Tibial artery (tissue), 4 donors: ENCODE measurements at regions of chr12 and their contacts with region 1.

Region 1: DNA sequence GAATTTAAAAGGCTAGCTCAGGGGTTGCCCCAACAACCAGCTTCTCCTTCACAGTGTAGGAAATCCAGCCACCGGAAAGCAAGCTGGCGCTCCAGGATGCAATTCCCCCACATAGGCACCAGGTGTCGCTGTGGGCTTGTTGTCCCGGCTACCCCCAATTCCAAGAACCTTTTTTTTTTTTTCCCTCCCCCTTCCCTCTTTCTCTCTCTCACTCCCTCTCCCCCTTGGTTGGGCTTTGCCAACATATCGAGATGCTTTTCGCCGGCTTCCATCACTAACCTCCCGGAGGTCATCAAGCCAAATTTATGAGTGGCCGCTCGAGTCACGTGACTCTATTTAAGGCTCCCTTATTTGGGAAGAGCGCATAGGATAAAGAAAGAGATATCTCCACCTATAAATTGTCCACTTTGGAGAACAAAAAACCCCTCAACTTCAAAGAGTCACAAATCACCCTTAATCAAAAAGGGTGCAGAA is at the start of gene HOXC5:
- DNase-seq: peak; percentile 65 to 86
- H3K4me3 ChIP-seq: peak within 1 kb of the TSS; percentile 50 to 55
- H3K27ac ChIP-seq: peak within 1 kb of the TSS; percentile 41 to 49
- H3K4me1 ChIP-seq: peaks cover 0 to 83% (median 63%) of the 10 kb centered on the region in 4 donors
- H3K27me3 ChIP-seq: no peaks in the 10 kb centered on the region
- CTCF ChIP-seq: peak; percentile 94

Region 2: GRCh38 chr12:53984901-53985709 is 47.6 kb before region 1 on chr12 and contains the start of gene HOXC10:
- intact Hi-C with region 1: no loop called
- DNase-seq: peak; percentile 97 to 98
- H3K4me3 ChIP-seq: peak within 1 kb of the TSS; percentile 64 to 84
- H3K27ac ChIP-seq: peak within 1 kb of the TSS; percentile 93 to 98
- H3K4me1 ChIP-seq: peaks cover 4 to 52% (median 31%) of the 10 kb centered on the region in 4 donors
- H3K27me3 ChIP-seq: no peaks in the 10 kb centered on the region
- CTCF ChIP-seq: peak; percentile 77 to 82

Region 3: GRCh38 chr12:54134850-54135249 is 102.2 kb after region 1 on chr12:
- intact Hi-C with region 1: loop called (anchors 5 kb)
- DNase-seq: no peak
- H3K4me3 ChIP-seq: no peak overlapping the region
- H3K27ac ChIP-seq: no peak overlapping the region
- H3K4me1 ChIP-seq: peaks cover 0 to 32% (median under 1%) of the 10 kb centered on the region in 4 donors
- H3K27me3 ChIP-seq: no peaks in the 10 kb centered on the region
- CTCF ChIP-seq: no peak

Region 4: GRCh38 chr12:54147186-54147585 is 114.5 kb after region 1 on chr12:
- intact Hi-C with region 1: loop called (anchors 5 kb)
- DNase-seq: peak in 1 of 2 donors; percentile 82
- H3K4me3 ChIP-seq: peak overlapping the region in 1 of 2 donors; percentile 8
- H3K27ac ChIP-seq: peak overlapping the region; percentile 53 to 74
- H3K4me1 ChIP-seq: peaks cover 0 to 52% (median 29%) of the 10 kb centered on the region in 4 donors
- H3K27me3 ChIP-seq: no peaks in the 10 kb centered on the region
- CTCF ChIP-seq: peak; percentile 38 to 51

Region 5: DNA sequence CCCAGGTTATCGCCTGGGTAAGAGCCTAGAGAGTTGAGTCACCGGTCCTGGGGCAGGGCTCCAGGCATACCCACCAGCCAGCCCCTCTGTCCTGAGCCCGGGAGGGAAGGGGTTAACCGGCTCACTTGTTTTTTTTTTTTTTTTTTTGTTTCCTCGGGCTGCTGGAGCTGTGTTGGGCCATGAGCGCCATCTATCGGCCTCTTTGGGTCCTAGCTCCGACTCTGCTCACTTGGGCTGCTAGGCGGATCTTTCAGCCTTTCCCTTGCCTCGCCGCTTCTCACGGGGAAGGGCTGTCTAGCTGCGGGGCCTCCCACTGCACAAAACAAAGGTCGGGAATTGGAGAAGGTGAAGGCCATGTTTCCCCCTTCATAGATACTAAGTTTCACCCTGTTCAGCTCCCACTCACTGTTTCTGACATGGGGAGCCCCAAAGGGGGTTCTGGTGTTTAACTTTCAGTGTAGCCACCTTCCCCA is 158.9 kb after region 1 on chr12:
- intact Hi-C with region 1: loop called (anchors 2 kb)
- DNase-seq: peak; percentile 82 to 89
- H3K4me3 ChIP-seq: no peak overlapping the region
- H3K27ac ChIP-seq: no peak overlapping the region
- H3K4me1 ChIP-seq: peaks cover 0 to 20% (median 10%) of the 10 kb centered on the region in 4 donors
- H3K27me3 ChIP-seq: peaks cover 0 to 10% of the 10 kb centered on the region in 2 donors
- CTCF ChIP-seq: peak; percentile 79 to 83

Region 6: DNA sequence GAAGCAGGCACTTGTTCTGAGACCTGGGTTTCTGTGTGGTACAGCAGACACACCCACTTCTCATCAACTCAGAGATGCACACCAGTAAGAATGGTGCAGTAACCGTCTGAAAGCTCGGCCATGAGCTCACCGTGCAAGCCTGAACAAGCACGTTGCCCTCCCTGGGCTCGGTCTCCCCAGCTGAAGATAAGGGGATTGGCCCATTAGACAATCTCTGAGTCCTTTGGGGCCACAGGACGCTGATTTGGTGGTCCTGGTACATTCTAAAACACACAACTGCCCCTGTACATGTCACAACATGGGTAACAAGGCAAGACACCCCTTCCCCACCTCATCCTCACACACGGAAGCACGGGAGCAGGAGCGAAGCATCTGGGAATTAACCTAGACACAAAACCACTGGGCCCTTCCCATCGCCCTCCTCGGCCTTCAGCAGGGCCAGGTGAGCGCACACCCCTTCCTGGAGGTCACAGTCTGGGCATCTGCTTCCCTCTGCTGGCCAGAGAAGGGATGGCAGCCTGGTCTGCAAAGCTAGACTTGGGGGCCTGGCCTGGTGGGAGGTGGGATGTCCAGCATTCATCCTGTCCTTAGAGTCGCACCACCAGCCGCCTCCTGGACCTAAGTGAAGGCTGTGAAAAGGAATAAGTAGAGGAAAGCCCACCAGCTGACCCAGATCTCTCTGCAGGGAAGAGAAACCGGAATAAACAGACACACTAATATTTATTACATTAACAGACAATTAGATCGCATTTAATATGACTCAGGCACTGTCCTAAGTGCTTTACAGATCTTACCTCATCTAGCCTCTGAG is 175.0 kb after region 1 on chr12:
- intact Hi-C with region 1: loop called (anchors 5 kb)
- DNase-seq: peak; percentile 78 to 82
- H3K4me3 ChIP-seq: no peak overlapping the region
- H3K27ac ChIP-seq: no peak overlapping the region
- H3K4me1 ChIP-seq: no peaks in the 10 kb centered on the region
- H3K27me3 ChIP-seq: peaks cover 0 to 13% of the 10 kb centered on the region in 2 donors
- CTCF ChIP-seq: peak; percentile 89 to 95